ENCODE measurements at regions of chr14 and their contacts with region 1.

Region 1: DNA sequence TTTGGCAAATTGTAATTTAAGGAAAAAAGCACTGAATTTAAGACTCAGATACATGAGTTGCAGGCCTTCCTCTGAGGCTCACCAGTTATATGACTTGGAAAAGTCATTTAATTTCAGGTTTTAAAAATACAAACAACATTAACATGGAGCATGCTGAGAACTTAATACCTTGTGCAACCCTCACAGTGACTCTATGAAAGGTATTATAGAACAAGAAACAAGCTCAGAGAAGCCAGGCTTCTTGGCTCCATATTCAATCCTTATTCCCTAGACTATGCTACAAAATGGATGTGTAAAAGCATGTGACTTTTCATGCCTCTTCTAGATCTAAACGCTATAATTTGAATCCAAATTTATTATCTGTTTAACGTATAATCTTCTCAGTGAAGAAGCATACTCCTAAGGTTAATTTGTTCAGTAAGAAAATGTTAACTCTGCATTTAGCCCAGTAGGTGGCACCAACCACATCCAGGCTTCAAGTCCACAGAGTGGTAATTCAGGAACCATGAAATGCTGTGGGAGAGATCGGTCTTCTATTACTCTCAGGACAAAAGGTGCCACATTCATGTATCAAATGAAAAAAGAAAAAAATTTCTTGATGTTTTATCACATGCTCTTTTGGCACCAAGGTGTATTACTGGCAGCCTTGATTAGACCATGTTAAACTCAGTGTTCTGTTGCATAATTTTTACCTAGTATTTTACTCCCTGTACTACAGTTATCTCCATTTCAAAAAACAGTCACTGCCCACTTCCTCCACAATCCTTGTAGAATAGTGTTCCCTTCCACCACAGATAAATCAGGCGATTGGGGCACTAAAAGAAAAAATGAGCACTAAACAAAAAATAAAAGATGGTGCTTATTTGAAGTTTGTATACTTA is 9.3 kb downstream of the CCDC196 start:
- DNase-seq: peak in 1 of 2 donors; percentile 75
- ATAC-seq: peak in 2 of 3 donors; percentile 64 to 76
- H3K4me3 ChIP-seq: no peak overlapping the region
- H3K4me3 Mint-ChIP-seq: no peak overlapping the region
- H3K27ac ChIP-seq: no peak overlapping the region
- H3K27ac Mint-ChIP-seq: no peak overlapping the region
- H3K4me1 ChIP-seq: no peaks in the 10 kb centered on the region
- H3K4me1 Mint-ChIP-seq: no peaks in the 10 kb centered on the region
- H3K27me3 ChIP-seq: no peaks in the 10 kb centered on the region
- H3K27me3 Mint-ChIP-seq: peaks cover 7 to 8% of the 10 kb centered on the region in 2 donors
- CTCF ChIP-seq: peak; percentile 64

Region 2: DNA sequence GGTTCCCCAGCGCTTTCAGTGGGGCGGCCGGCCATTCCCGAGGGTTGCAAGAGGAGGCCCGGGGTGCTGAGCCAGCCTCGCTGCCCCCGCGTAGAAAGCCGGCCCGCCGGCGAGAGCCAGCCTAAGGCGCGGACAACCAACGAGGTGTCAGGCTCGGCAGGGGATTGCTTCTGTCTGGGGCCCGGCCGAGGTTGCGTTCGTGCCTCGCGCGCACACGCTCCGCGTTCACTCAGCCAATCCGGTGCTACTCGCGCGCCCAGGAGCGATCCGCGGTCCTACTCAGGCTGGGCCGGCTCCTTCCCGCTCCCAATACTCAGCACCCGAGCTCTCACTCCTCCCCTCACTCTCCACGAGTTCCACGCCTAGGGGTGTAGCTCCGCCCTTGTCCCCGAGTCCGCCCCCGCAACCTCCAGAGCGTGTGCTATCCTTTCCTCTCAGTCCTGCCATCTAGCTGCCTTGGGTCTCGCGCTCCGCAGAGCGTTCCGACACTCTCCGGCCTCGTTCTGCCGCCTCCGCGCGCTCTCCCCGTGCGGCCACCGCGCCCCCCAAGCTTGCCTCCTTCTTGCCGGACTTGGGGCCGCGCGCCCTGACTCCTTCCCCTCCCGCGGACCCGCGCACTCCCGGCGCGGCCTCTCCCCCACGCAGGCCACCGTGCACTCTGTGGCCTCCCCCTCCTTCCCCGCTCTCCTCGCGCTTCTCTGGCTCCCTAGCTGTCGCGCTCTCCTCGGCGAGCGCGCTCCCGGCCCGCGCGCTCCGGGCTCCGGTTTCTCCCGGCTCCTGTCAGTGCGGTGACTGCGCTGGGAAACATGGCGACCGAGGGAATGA is 12.5 kb after region 1 on chr14 and contains the start of gene GPHN:
- intact Hi-C with region 1: no loop called
- DNase-seq: peak; percentile 70 to 91
- ATAC-seq: peak; percentile 79 to 91 (median 83)
- H3K4me3 ChIP-seq: peak within 1 kb of the TSS; percentile 76
- H3K4me3 Mint-ChIP-seq: peak within 1 kb of the TSS; percentile 96
- H3K27ac ChIP-seq: peak within 1 kb of the TSS; percentile 64
- H3K27ac Mint-ChIP-seq: peak within 1 kb of the TSS; percentile 62 to 85
- H3K4me1 ChIP-seq: peaks cover 17% of the 10 kb centered on the region
- H3K4me1 Mint-ChIP-seq: peaks cover 18 to 27% of the 10 kb centered on the region in 2 donors
- H3K27me3 ChIP-seq: peaks cover 6% of the 10 kb centered on the region
- H3K27me3 Mint-ChIP-seq: peaks cover 14 to 21% of the 10 kb centered on the region in 2 donors
- CTCF ChIP-seq: no peak
- total RNA-seq, gene GPHN: 6.3 to 9.4 (median 8.7) TPM

Region 3: DNA sequence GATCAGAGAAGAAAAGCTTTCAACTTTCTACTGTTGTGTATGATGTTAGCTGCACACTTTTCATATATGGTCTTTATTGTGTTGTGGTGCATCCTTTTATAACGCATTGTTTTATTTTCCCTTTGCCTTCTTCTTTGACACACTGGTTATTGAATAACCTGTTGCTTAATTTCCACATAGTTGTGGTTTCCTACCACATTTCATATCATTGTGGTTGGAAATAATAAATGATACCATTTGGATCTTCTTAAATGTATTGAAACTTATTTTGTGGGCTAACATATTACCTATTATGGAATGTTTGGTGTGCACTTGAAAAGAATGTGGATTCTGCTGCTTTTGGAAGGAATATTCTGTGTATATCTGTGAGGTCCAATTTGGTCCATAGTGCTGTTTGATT is 77.4 kb after region 1 on chr14:
- intact Hi-C with region 1: no loop called
- DNase-seq: no peak
- ATAC-seq: no peak
- H3K4me3 ChIP-seq: no peak overlapping the region
- H3K4me3 Mint-ChIP-seq: no peak overlapping the region
- H3K27ac ChIP-seq: no peak overlapping the region
- H3K27ac Mint-ChIP-seq: no peak overlapping the region
- H3K4me1 ChIP-seq: no peaks in the 10 kb centered on the region
- H3K4me1 Mint-ChIP-seq: peaks cover 0 to 10% of the 10 kb centered on the region in 2 donors
- H3K27me3 ChIP-seq: no peaks in the 10 kb centered on the region
- H3K27me3 Mint-ChIP-seq: no peaks in the 10 kb centered on the region
- CTCF ChIP-seq: no peak

Region 4: GRCh38 chr14:67137744-67138371 is 642.4 kb after region 1 on chr14:
- intact Hi-C with region 1: loop called (anchors 2 kb)
- DNase-seq: peak in 1 of 2 donors; percentile 4
- ATAC-seq: no peak
- H3K4me3 ChIP-seq: no peak overlapping the region
- H3K4me3 Mint-ChIP-seq: no peak overlapping the region
- H3K27ac ChIP-seq: no peak overlapping the region
- H3K27ac Mint-ChIP-seq: no peak overlapping the region
- H3K4me1 ChIP-seq: no peaks in the 10 kb centered on the region
- H3K4me1 Mint-ChIP-seq: no peaks in the 10 kb centered on the region
- H3K27me3 ChIP-seq: no peaks in the 10 kb centered on the region
- H3K27me3 Mint-ChIP-seq: no peaks in the 10 kb centered on the region
- CTCF ChIP-seq: peak; percentile 20